ENCODE measurements at regions of chr1 and their contacts with region 1.

Region 1: DNA sequence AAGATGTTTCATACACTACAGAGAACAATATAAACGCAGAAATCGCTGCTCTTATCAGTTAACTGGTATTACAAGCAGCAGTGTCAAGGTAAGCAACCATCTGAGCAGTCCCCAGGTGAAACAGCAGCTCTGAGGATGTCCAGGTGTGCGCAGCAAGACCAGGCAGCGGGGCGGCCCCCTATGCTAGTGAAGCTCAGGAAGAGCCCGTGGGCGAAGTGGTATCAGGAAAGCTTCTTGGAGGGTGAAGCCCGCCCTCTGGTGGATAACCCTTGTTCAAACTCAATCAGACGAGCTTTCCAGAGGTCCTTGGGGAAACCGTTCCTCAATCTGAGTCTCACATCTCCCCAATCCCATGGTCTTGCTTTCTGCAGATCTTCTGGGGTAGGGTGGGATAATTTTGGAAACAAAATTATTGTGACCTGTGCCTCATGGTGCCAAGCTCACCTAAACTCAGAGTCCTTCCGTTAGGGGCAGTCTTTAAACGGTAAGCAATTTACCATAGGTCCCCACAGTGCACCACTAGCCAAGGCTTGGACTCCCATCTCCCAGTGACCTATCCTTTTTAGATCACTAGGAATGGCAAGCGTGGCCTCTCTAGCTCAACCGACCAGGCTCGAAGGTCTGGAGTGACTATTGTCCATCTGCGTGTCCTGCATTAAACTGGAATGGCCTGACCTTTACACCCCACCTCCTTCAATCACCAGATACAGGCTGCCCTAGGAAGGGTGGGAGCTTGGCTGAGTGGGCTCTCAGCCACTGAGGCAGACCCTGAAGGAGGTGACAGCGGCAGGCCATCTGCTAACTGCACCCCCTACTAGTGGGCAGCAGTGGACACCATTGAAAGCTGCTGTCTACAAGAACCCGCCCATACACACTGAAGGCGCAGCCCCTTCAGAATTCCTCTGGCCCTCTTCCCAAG is 13.6 kb upstream of the FAM110D start:
- DNase-seq: peak; percentile 81
- H3K4me3 ChIP-seq: no peak overlapping the region
- H3K27ac ChIP-seq: no peak overlapping the region
- H3K4me1 ChIP-seq: no peaks in the 10 kb centered on the region
- H3K27me3 ChIP-seq: peaks cover 14% of the 10 kb centered on the region; the same call in 1 of the 2 replicates
- CTCF ChIP-seq: peak; percentile 73
- EP300 ChIP-seq: no peak
- RAD21 ChIP-seq: peak; percentile 92

Region 2: DNA sequence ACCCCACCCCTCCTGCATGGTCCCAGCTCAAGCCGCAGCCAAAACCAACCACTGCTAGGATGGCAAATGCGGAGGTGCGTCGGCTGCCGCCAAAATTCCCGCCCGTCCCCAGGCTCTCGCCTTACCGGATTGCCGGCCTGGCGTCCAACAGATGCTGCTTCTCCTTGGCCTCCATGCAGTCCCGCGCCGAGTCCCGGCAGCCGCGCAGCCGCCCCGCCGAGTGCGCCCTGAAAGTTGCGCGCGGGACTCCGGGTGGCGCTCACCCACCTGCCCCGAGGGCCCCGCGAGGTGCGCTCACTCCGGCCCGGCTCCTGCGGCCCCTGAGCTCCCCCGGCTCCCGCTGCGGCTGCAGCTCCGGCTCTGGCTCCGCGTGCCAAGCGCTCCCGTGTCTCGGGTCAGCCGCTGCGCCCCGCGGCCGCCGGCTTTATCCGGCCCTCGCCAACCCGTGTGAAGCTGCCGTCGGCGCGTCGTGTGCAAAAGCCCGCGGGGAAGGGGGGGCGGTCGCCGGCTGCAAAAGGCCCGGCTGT is 99.5 kb before region 1 on chr1 and contains the start of gene SLC30A2:
- CTCF ChIA-PET with region 1: interaction called, 19 read pairs
- POLR2A ChIA-PET with region 1: no interaction called
- DNase-seq: peak; percentile 71
- H3K4me3 ChIP-seq: no peak within 1 kb of the TSS
- H3K27ac ChIP-seq: no peak within 1 kb of the TSS
- H3K4me1 ChIP-seq: no peaks in the 10 kb centered on the region; a peak in 1 of 4 replicates
- H3K27me3 ChIP-seq: peaks cover 70% of the 10 kb centered on the region
- CTCF ChIP-seq: no peak
- EP300 ChIP-seq: no peak
- RAD21 ChIP-seq: no peak
- polyA plus RNA-seq, gene SLC30A2: not detected in 2 replicates

Region 3: DNA sequence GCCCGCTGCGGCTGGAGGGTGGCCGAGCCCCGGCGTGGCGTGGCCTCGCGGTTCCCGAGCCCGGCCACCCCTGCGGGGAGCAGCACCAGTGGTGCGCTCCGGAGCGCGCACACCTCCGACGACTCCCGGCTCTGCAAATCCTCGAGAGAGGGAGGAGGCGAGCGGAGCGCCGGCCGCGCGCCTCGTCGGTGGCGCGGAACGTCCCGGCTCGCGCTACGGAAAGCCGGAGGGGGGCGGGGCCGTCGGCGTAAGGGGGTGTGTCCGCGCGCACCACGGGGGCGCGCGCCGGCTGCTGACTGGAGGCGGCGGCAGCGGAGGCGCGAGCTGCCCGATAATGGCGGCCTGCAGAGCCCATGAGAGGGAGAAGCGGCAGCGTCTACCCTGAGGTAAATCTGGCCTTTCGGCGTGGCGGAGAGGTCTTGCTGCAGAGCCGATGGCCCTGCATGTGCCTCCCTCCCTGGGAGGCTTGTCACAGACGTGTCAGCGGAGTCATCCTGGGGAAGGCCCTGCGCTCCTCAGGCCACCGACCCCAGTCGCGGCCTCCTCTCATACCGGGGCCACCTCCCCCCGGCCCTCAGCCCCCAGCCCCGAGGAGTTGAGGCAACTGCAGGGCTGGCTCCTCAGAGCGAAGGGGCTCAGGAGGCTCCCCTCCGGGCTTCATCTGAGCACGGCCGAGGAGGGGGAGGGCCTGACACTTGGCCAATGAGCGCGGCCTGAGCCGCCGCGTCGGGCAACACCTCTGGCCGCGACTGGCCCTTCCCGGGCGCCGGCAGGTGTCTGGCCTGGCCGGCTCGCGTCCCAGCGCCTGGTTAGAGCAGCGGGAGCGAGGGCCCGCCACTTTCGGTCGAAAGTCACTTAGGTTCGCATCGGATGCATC is 33.5 kb before region 1 on chr1 and contains the start of gene PDIK1L:
- CTCF ChIA-PET with region 1: interaction called, 235 read pairs
- POLR2A ChIA-PET with region 1: interaction called, 4 read pairs
- DNase-seq: peak; percentile 96
- H3K4me3 ChIP-seq: peak within 1 kb of the TSS; percentile 94 to 99
- H3K27ac ChIP-seq: peak within 1 kb of the TSS; percentile 72 to 94
- H3K4me1 ChIP-seq: peaks cover 5 to 13% of the 10 kb centered on the region in 2 experiments
- H3K27me3 ChIP-seq: no peaks in the 10 kb centered on the region
- CTCF ChIP-seq: no peak
- EP300 ChIP-seq: peak in 1 of 2 experiments; percentile 1; a peak in 1 of 4 replicates
- RAD21 ChIP-seq: no peak
- polyA plus RNA-seq, gene PDIK1L: 1.2 and 1.3 TPM in 2 replicates

Region 4: DNA sequence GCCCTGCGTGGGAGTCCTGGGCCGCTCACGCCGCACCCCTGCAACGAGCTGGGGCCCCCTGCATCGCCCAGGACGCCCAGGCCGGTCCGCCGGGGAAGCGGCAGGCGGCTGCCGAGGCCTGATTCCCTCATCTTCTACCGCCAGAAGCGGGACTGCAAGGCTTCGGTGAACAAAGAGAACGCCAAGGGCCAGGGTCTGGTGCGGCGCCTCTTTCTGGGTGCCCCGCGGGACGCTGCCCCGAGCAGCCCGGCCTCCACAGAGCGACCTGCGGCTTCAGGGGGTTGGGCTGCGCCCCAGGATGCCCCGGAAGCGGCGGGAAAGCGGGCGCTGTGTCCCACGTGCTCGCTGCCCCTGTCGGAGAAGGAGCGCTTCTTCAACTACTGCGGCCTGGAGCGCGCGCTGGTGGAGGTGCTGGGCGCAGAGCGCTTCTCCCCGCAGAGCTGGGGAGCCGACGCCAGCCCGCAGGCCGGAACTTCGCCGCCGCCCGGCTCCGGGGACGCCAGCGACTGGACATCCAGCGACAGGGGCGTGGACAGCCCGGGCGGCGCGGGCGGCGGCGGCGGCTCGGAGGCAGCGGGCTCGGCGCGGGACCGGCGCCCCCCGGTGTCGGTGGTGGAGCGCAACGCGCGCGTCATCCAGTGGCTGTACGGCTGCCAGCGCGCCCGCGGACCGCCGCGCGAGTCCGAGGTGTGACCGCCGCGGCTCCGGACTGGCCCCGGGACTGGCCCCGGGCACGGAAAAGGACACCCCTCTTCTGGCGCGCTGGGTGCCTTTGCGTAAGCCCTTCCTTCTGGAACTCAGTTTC is 16.3 kb after region 1 on chr1:
- CTCF ChIA-PET with region 1: interaction called, 131 read pairs
- POLR2A ChIA-PET with region 1: interaction called, 3 read pairs
- DNase-seq: peak; percentile 89
- H3K4me3 ChIP-seq: peak overlapping the region in 1 of 2 experiments; percentile 7; a peak in 1 of 4 replicates
- H3K27ac ChIP-seq: no peak overlapping the region
- H3K4me1 ChIP-seq: peaks cover 2 to 24% of the 10 kb centered on the region in 2 experiments; a peak in 1 of 4 replicates
- H3K27me3 ChIP-seq: no peaks in the 10 kb centered on the region
- CTCF ChIP-seq: no peak
- EP300 ChIP-seq: no peak
- RAD21 ChIP-seq: no peak

Measured in SK-N-SH (cell line).